A549 (cell line): ENCODE measurements at regions of chr5 and their contacts with region 1.

Region 1: GRCh38 chr5:59506285-59506877 is 387.1 kb downstream of the PDE4D start:
- DNase-seq: no peak
- ATAC-seq: no peak
- H3K4me3 ChIP-seq: no peak overlapping the region
- H3K27ac ChIP-seq: peak overlapping the region; percentile 67 to 84
- H3K4me1 ChIP-seq: peaks cover 100% of the 10 kb centered on the region
- CTCF ChIP-seq: peak; percentile 73; the same call in 2 of the 3 replicates
- EP300 ChIP-seq: no peak
- POLR2A ChIP-seq: no peak
- RAD21 ChIP-seq: peak; percentile 79 to 89

Region 2: DNA sequence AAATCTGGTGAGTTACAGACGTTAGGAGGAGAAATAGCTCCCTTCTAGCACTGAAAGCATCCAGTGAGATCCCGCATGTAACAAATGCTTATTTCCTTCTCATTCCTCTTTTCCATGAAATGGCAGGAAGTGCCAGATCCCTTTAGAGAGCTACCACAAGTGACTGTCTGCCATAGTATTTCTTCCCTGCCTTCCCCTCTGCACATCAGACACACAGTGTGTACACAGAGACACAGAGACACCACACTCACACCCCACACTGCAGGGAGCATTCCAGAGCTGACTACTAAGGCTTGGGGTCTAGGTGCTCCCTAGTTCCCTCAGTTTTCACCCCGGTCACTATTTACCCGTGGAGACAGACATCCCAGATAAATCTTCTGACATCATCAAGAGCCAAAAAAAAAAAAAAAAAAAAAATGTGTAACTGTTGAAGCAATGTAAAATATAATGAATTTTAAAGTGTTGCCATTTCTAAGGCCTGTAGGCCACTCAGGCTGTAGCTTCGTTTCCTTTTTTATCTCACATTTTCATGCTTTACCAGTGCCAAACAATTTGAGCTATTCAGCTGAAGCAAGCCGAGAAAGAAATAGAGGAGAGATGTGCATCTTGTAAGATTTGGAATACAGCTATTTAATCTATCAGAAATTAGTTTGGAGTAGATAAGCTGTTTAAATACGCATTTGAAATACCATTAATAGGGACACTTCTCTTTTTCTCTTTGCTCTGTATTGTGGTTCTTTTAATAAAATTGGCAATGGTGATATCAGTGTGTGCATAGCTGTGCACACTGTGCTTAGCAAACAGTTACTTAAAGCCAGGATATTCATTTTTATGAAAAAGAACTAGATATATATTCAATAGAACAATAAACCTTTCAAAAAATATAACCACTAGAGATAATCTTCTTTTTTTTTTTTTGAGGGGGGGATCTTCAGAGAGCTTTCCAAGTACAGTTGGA is 18.3 kb before region 1 on chr5:
- CTCF ChIA-PET with region 1: interaction called, 14 read pairs
- POLR2A ChIA-PET with region 1: no interaction called
- DNase-seq: peak in 1 of 2 experiments; percentile 75
- ATAC-seq: peak; percentile 60 to 81; a peak in 5 of 6 replicates
- H3K4me3 ChIP-seq: peak overlapping the region; percentile 14; the same call in 2 of the 3 replicates
- H3K27ac ChIP-seq: peak overlapping the region; percentile 76 to 85
- H3K4me1 ChIP-seq: peaks cover 99% of the 10 kb centered on the region
- CTCF ChIP-seq: no peak
- EP300 ChIP-seq: no peak
- POLR2A ChIP-seq: no peak
- RAD21 ChIP-seq: no peak

Region 3: DNA sequence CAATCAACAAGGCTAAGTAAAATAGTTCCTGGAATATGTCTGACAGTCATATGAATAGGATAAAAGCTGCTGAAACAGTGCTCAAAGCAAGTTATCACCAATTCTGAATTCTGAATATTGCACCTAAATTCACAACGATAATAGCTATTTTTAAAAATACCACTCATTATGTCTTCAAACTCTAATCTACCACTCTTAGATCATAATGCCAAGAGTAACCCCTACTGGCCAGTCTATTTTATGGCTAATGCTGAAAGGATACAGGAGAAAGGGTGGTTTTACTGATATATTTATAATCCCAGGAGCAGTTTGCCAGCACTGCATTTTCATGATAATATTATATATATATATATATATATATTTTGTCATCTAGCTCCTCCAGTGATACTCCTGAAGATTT is 154.4 kb after region 1 on chr5:
- CTCF ChIA-PET with region 1: interaction called, 28 read pairs
- POLR2A ChIA-PET with region 1: no interaction called
- DNase-seq: peak; percentile 36 to 65
- ATAC-seq: peak; percentile 64 to 70; a peak in 4 of 6 replicates
- H3K4me3 ChIP-seq: no peak overlapping the region
- H3K27ac ChIP-seq: peak overlapping the region; percentile 71 to 76
- H3K4me1 ChIP-seq: peaks cover 100% of the 10 kb centered on the region
- CTCF ChIP-seq: peak; percentile 75
- EP300 ChIP-seq: no peak
- POLR2A ChIP-seq: no peak
- RAD21 ChIP-seq: peak; percentile 87 to 90

Region 4: GRCh38 chr5:59666440-59667068 is 160.2 kb after region 1 on chr5:
- CTCF ChIA-PET with region 1: interaction called, 28 read pairs
- POLR2A ChIA-PET with region 1: no interaction called
- DNase-seq: no peak
- ATAC-seq: peak in 1 of 2 experiments; percentile 61; a peak in 3 of 6 replicates
- H3K4me3 ChIP-seq: no peak overlapping the region
- H3K27ac ChIP-seq: peak overlapping the region in 1 of 2 experiments; percentile 11; a peak in 2 of 6 replicates
- H3K4me1 ChIP-seq: peaks cover 62% of the 10 kb centered on the region
- CTCF ChIP-seq: no peak
- EP300 ChIP-seq: no peak
- POLR2A ChIP-seq: no peak
- RAD21 ChIP-seq: 0 out of 5 replicates have a peak, but pooled peaks have one; percentile 7 to 12

Region 5: DNA sequence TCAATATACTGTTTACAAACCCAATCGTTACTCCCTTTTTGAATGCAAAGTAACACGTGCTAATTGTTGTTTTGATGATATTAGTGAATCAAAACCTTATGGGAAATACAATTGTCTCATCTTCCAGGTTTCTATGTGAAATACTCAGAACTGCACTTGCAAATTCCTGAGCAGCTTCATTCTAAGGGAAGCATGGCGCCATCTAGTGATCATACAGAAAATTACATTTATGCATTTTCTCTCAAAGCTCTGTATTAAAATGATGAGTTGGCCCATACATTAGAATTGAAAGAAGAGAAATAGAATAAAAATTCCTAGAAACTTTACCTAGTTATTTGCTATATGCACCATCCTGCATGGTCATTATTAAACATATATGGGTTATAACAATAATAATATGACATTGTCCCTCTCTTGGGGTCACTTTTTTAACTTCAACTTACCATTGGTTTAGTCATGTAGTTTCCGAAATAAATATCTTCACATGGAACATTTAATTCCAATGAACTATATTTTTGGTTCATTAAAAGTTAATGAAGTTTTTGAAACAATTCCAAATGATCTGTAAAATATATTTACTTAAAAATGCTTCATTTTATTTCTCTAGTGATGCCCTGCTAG is 167.2 kb after region 1 on chr5:
- CTCF ChIA-PET with region 1: interaction called, 21 read pairs
- POLR2A ChIA-PET with region 1: no interaction called
- DNase-seq: peak; percentile 14 to 68
- ATAC-seq: peak; percentile 39 to 78; a peak in 3 of 6 replicates
- H3K4me3 ChIP-seq: no peak overlapping the region
- H3K27ac ChIP-seq: peak overlapping the region; percentile 45 to 62
- H3K4me1 ChIP-seq: peaks cover 35% of the 10 kb centered on the region
- CTCF ChIP-seq: peak; percentile 97
- EP300 ChIP-seq: no peak
- POLR2A ChIP-seq: no peak
- RAD21 ChIP-seq: peak; percentile 90 to 93

Region 6: GRCh38 chr5:59799668-59800346 is 293.4 kb after region 1 on chr5:
- CTCF ChIA-PET with region 1: interaction called, 19 read pairs
- POLR2A ChIA-PET with region 1: no interaction called
- DNase-seq: peak; percentile 29 to 68
- ATAC-seq: peak; percentile 80 to 84
- H3K4me3 ChIP-seq: peak overlapping the region; percentile 22; the same call in 2 of the 3 replicates
- H3K27ac ChIP-seq: peak overlapping the region; percentile 90 to 95
- H3K4me1 ChIP-seq: peaks cover 48% of the 10 kb centered on the region
- CTCF ChIP-seq: peak; percentile 91
- EP300 ChIP-seq: no peak
- POLR2A ChIP-seq: no peak
- RAD21 ChIP-seq: peak; percentile 94 to 96